ENCODE measurements at regions of chr2 and their contacts with region 1.

Region 1: DNA sequence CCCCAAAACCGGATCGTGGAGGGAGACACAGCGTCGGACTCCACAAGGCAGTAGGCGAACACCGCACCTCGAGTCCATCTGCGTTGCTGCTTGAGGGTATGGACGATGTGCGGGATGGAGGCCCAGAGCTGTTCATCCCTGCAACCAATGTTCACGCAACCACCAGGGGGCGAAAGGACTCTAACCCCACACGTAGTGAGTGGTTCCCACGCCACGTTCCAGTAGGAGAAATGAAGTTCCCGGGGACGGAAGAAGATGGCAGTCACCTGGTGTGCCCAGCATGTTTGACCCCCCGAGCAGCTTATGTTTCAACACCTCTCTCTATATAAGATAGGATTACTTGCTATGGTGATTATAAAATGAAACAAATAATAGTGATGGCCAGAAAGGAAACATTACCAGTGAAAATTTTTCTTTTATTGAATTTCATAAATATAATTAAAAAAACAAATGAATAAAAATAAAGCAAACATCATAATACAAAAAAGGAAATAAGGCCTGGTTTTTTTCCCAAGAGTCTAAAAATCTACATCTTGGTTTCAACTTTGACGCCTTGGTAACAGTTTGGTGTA is 184.3 kb downstream of the SH3BP4 start:
- DNase-seq: peak; percentile 71 to 87 (median 84)
- ATAC-seq: peak; percentile 73 to 96 (median 89)
- H3K4me3 ChIP-seq: no peak overlapping the region
- H3K27ac ChIP-seq: no peak overlapping the region
- H3K4me1 ChIP-seq: no peaks in the 10 kb centered on the region
- H3K27me3 ChIP-seq: no peaks in the 10 kb centered on the region
- CTCF ChIP-seq: peak; percentile 63 to 88 (median 74)
- POLR2A ChIP-seq: no peak

Region 2: DNA sequence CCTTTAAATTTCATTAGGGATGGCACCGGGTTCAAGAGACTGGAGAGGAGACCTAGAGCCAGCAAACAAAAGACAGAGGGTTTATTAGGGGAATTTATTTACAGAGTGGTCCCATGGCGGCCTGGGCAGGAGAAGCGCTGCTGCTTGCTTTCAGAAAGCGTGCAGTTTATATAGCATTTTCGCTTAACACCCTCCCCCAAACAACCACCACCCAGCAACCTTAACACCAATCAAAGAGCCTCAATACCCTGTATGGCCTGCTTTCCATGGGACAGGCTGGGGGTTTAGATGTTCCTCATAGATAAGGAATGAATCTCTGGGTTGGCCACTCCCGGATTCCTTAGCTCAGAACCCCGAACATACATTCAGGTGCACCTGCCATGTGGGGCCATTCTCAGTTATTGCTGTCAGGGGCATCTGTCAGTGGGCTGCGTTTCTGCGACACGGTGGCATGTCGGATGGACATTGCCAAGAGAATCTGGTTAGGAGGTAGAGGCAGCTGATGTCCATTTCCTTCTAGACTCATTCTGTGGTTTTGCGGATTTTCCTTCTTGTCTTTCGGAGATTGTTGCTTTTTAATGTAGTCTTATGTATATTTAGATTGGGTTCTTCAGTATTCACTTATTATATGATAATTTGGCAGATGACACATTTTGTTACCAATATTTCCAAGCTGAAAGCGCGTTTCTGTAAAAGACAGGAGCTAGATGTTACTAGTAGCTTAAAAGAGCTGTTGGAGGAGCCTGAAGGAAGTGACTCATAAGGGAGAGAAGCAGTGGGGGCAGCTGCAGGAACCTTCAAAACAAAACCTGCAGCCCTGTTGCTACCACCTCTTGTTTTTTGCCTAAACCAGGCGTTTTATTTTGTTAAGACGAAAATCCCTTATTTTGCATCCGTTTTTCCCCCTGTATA is 364.9 kb after region 1 on chr2:
- intact Hi-C with region 1: loop called in 4 of 10 experiments (anchors 5 to 10 kb)
- DNase-seq: no peak
- ATAC-seq: peak in 2 of 4 donors; percentile 36 to 53
- H3K4me3 ChIP-seq: peak overlapping the region in 9 of 12 donors; percentile 2 to 34 (median 23)
- H3K27ac ChIP-seq: peak overlapping the region in 5 of 12 donors; percentile 7 to 67 (median 35)
- H3K4me1 ChIP-seq: peaks cover 2 to 70% (median 41%) of the 10 kb centered on the region in 12 donors
- H3K27me3 ChIP-seq: peaks cover 0 to 3% (median 0%) of the 10 kb centered on the region in 9 donors
- CTCF ChIP-seq: no peak
- POLR2A ChIP-seq: no peak

Region 3: GRCh38 chr2:235551965-235552364 is 415.9 kb after region 1 on chr2:
- intact Hi-C with region 1: loop called in 1 of 10 experiments (anchors 5 kb)
- DNase-seq: peak in 3 of 5 donors; percentile 37 to 61 (median 37)
- ATAC-seq: peak; percentile 63 to 84 (median 74)
- H3K4me3 ChIP-seq: no peak overlapping the region
- H3K27ac ChIP-seq: no peak overlapping the region
- H3K4me1 ChIP-seq: peaks cover 0 to 25% (median 13%) of the 10 kb centered on the region in 12 donors
- H3K27me3 ChIP-seq: no peaks in the 10 kb centered on the region
- CTCF ChIP-seq: peak in 11 of 12 donors; percentile 30 to 74 (median 57)
- POLR2A ChIP-seq: no peak

Region 4: DNA sequence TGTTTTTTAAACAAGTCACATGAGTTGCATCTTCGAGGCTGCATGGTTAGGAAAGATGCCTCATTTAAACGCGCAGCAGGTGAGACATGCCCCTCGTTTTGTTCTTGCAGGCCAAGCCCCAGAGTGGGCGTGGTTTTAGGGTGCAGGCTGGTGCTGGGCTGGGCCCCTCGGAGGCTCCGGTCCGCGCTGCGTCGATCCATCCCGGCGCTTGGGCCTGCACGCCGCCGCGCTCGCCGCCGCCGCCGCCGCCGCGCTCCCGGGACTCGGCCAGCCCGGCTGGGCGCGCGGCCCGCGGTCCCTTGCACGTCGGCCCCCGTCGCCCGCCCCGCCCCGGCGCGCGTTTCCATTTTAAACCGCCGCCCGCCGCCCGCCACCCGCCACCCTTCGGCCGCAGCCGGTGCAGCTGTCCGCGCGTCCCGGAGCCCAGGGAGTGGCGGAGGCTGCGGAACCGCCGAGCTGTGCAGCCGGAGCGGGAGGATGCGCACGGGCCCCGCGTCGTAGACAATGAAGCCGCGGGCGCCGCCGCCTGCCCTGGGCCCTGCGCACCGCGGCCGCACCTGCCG is 533.3 kb after region 1 on chr2:
- intact Hi-C with region 1: loop called in 6 of 10 experiments (anchors 5 to 10 kb)
- DNase-seq: peak; percentile 71 to 86 (median 80)
- ATAC-seq: peak in 3 of 4 donors; percentile 64 to 85 (median 82)
- H3K4me3 ChIP-seq: peak overlapping the region in 11 of 12 donors; percentile 20 to 75 (median 58)
- H3K27ac ChIP-seq: peak overlapping the region in 1 of 12 donors; percentile 48
- H3K4me1 ChIP-seq: peaks cover 0 to 43% (median 18%) of the 10 kb centered on the region in 12 donors
- H3K27me3 ChIP-seq: peaks cover 0 to 42% (median 0%) of the 10 kb centered on the region in 9 donors
- CTCF ChIP-seq: peak in 2 of 12 donors; percentile 7 to 27
- POLR2A ChIP-seq: no peak

Region 5: DNA sequence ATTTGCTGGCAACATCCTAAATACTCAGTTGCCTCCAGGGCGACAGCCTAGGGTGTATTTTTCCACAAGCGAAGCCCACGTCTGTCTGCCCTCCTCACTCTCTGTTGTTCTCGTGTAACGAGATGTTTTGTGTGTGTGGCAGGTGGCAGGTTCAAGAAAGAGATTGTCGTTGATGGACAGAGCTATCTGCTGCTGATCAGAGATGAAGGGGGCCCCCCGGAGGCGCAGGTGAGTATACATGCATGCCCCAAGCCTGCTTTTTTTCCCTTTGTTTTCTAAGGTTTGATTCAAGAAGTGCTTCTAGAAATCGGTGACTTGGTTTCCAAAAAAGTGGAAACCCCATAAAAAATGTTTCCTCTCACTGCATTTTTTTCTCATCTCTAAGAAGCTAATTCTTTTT is 604.7 kb after region 1 on chr2:
- intact Hi-C with region 1: loop called (anchors 1 to 5 kb)
- DNase-seq: no peak
- ATAC-seq: no peak
- H3K4me3 ChIP-seq: no peak overlapping the region
- H3K27ac ChIP-seq: no peak overlapping the region
- H3K4me1 ChIP-seq: no peaks in the 10 kb centered on the region
- H3K27me3 ChIP-seq: no peaks in the 10 kb centered on the region
- CTCF ChIP-seq: peak in 3 of 12 donors; percentile 10 to 15 (median 14)
- POLR2A ChIP-seq: no peak

Measured in heart left ventricle (tissue), 16 donors.